AG04450 (cell line): ENCODE measurements at regions of chr2 and their contacts with region 1.

Region 1: DNA sequence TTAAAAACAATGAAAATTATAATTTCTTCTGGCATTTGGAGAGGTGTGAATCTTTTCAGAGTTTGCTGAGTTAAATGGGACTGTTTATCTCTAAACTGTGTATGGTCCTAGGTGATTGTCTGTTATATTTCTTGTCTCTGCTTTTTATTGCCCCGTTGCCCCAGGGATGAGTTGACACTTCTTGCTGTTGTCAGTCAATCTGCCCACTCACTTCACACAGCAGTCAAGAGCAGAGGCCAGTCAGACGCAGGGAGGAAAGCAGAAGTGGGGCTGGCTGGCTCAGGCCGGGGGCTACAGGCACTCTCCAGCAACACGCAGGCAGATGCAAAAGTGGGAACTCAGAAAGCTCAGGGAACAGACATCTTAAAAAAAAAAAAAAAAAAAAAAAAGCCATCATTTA is 365.2 kb downstream of the CLIP4 start:
- DNase-seq: no peak
- H3K4me3 ChIP-seq: no peak overlapping the region
- H3K27ac ChIP-seq: no peak overlapping the region
- H3K27me3 ChIP-seq: no peaks in the 10 kb centered on the region
- CTCF ChIP-seq: no peak

Region 2: DNA sequence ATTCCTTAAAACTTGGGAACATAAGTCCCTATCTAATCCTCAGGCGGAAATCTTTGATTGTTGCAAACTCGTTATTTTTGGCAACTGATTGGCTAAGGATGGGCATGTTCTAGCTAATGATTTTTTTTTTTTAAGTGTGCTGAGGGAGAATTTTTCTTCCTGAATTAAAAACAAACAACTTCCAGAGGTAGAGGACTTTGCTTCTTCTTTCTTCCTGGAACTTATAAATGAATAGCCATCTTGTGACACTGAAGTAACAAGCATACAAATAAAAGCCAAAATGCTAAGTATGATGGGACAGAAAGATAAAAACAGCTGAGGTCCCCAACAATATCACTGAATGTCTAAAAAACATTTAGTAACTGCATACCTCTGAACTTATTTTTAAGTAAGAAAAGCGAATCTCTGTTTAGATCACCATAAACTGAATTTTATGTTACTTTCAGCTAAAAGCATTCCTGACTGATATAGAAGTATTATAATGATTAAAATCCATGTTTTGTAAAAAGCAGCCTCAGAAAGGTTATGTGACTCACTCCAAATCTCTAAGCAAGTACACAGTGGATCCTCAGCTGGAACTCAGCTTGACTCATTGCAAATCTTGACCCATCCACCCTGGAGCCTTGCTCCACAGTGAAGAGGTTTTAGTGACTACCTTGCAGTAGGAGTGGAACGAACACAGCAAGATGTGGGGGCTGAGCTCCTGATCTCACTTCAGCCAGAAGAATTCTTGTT is 20.8 kb before region 1 on chr2:
- CTCF ChIA-PET with region 1: interaction called, 10 read pairs
- POLR2A ChIA-PET with region 1: interaction called, 5 read pairs
- DNase-seq: peak; percentile 62
- H3K4me3 ChIP-seq: no peak overlapping the region
- H3K27ac ChIP-seq: no peak overlapping the region
- H3K27me3 ChIP-seq: no peaks in the 10 kb centered on the region
- CTCF ChIP-seq: no peak